BJ (cell line): ENCODE measurements at regions of chr19 and their contacts with region 1.

Region 1: DNA sequence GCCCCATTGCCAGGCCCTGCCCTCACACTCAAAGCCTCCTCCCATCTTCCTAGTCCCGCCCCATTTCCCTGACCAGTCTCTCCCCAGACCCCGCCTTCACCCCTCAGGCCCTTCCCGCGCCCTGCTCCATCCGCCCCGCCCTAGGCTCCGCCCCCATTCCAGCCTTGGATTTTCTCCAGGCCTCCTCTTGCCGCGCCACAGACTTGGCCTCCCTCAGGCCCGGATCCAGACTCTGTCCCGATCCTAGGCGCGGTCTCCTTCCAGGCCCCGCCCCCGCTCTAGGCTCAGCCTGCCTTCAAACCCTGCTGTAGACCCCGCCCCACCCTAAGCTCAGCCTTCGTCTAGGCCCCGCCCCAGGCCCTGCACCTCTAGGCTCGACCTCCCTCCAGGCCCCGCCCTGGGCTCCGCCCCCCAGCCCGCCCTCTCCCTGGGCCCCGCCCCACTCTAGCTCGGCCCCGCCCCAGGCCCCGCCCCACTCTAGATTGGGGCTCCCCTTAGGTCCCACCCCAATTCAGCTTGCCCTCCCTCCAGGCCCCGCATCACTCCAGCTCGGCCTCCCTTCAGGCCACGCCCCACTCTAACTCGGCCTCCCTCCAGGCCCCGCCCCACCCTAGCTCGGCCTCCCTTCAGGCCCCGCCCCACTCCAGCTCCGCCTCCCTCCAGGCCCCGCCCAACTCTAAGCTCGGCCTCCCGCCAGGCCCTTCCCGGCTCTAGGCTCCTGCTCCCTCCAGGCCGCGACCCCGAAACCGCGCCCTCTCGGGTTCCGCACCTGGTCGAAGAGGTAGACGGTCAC is 18.5 kb downstream of the LMTK3 start:
- DNase-seq: peak; percentile 83
- H3K4me3 ChIP-seq: peak overlapping the region; percentile 75
- H3K27me3 ChIP-seq: peaks cover 4% of the 10 kb centered on the region; the same call in 1 of the 2 replicates
- CTCF ChIP-seq: no peak

Region 2: DNA sequence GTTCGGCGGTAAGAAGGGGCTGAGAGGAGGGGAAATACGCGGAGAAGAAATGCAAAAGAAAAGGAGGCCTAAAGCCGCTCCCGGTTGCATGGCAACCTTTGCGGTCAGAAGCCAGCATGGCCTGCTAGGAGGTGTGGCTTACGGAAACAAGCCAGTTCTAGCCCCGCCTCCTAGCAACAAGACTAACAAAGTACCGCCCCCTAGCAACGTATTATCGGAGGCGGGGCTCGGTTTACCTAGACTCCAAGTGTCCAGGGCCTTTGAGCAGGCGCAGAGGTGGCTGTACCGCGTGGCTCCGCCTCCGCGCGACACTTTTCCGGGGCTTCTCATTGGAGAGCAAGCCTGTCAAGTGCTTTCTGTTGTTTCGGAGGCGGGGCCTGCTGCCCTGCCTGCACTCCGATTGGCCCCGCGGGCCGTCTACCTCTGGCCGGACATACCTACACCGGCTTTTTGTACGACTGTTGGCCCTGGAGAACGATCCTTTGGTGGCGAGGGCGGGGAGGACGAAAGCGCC is 24.3 kb before region 1 on chr19:
- CTCF ChIA-PET with region 1: interaction called, 13 read pairs
- POLR2A ChIA-PET with region 1: interaction called, 4 read pairs
- DNase-seq: peak; percentile 100
- H3K4me3 ChIP-seq: peak overlapping the region; percentile 93
- H3K27me3 ChIP-seq: no peaks in the 10 kb centered on the region
- CTCF ChIP-seq: no peak

Region 3: DNA sequence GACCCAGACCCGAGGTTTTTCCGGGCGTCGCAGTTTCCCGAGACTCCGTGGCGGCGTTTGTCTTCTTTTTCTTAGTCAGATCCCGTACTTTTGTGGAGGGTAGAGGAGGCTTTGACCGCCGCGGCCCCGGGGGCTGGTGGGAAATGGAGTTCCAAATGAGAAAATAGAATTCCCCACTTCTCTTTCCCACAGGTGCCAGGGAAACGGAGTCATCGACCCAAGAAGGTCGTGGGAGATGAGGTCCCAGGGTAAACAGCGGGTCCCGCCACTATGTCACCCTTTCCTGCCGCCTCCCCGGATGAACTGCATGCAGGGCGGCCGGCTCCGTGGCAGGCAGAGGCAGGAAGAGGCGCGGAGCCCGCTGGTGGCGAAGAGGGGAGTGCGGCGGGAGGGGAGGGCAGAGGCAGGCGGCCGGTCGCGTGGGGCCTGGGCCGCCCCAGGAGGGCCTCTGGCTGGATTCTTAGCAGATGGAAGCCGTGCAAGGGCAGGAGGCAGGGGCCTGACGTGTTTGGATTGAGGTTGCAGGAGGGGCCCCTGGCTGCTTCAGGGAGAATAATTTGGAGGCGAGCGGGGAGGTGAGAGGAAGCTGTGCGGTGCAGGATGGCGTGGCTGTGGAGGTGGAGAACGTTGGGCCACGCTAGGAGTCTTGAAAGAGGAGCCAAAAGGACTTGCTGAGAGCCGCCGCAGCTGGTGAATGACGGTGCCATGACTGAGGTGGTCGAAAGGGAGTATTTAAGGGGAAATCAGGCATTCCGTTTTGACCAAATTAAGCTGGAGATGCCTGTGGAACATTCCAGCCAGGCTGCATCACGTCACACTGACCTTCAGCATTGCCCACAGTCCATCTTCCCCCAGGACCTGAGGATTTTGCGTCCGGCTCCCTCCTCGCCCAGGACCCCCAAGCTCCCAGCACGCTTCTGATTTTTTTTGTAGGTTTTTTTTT is 12.3 kb before region 1 on chr19:
- CTCF ChIA-PET with region 1: interaction called, 25 read pairs
- POLR2A ChIA-PET with region 1: no interaction called
- DNase-seq: no peak
- H3K4me3 ChIP-seq: peak overlapping the region; percentile 40
- H3K27me3 ChIP-seq: no peaks in the 10 kb centered on the region
- CTCF ChIP-seq: no peak

Region 4: GRCh38 chr19:48510421-48511280 is 17.5 kb after region 1 on chr19:
- CTCF ChIA-PET with region 1: interaction called, 10 read pairs
- POLR2A ChIA-PET with region 1: interaction called, 14 read pairs
- DNase-seq: no peak
- H3K4me3 ChIP-seq: peak overlapping the region; percentile 7; the same call in 1 of the 2 replicates
- H3K27me3 ChIP-seq: peaks cover 21% of the 10 kb centered on the region
- CTCF ChIP-seq: no peak

Region 5: GRCh38 chr19:48568345-48568886 is 75.3 kb after region 1 on chr19:
- CTCF ChIA-PET with region 1: interaction called, 10 read pairs
- POLR2A ChIA-PET with region 1: no interaction called
- DNase-seq: peak; percentile 62
- H3K4me3 ChIP-seq: no peak overlapping the region
- H3K27me3 ChIP-seq: no peaks in the 10 kb centered on the region
- CTCF ChIP-seq: no peak